Ascending aorta (tissue), 2 donors: ENCODE measurements at regions of chr3 and their contacts with region 1.

Region 1: GRCh38 chr3:107271787-107272387 is 105.4 kb upstream of the CCDC54 start:
- DNase-seq: no peak
- H3K4me3 ChIP-seq: no peak overlapping the region
- H3K27ac ChIP-seq: no peak overlapping the region
- H3K4me1 ChIP-seq: no peaks in the 10 kb centered on the region
- H3K27me3 ChIP-seq: no peaks in the 10 kb centered on the region
- CTCF ChIP-seq: peak in 2 of 3 experiments; percentile 50 to 62

Region 2: GRCh38 chr3:107297597-107297996 is 25.7 kb after region 1 on chr3:
- intact Hi-C with region 1: no loop called
- DNase-seq: no peak
- H3K4me3 ChIP-seq: no peak overlapping the region
- H3K27ac ChIP-seq: no peak overlapping the region
- H3K4me1 ChIP-seq: no peaks in the 10 kb centered on the region
- H3K27me3 ChIP-seq: no peaks in the 10 kb centered on the region
- CTCF ChIP-seq: no peak

Region 3: DNA sequence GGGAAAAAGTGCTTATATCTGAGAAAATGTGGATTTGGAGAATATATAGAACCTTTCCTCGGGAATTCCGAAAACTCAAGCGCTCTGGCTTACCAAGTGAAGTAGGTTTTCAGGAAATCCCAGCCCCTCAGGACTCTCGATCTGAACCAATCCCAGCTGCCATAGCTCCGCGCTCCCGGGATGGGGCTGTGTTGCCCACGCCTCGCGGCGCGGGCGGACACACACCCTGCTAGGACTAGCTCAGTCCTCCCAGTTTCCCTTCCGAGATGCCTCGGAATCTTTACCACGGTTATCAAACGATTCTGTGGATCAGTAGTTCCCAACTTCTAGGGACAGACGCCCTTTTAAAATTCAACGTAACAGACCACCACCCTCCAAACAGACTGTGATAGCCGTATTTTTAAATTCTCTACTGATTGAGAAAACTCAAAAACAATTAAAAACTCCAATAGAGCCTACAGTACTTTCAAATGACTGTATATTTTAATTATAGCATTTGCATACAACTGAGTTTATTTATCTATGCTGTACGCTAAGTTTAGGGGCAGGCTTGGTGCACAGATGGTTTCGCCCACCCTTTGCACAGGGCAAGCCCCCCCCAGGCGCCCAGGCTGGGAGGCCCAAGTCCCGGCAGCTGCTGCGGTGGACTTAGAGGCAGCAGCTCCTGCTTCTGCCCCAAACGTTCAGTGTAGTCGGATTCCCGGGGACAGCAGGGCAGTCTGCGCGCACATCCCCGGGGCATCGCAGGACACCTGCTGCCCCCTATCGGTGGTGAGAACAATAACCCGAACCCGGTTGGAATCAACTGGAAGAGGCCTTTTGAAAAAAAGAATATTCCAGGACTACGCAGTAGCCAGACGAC is 157.7 kb after region 1 on chr3:
- intact Hi-C with region 1: loop called (anchors 5 kb)
- DNase-seq: peak; percentile 13 to 86
- H3K4me3 ChIP-seq: peak overlapping the region; percentile 84 to 85
- H3K27ac ChIP-seq: peak overlapping the region; percentile 99 to 100
- H3K4me1 ChIP-seq: peaks cover 0 to 9% of the 10 kb centered on the region in 2 donors
- H3K27me3 ChIP-seq: no peaks in the 10 kb centered on the region
- CTCF ChIP-seq: peak; percentile 78 to 85 (median 83)